Lower leg skin (tissue), 4 donors: ENCODE measurements at regions of chr9 and their contacts with region 1.

Region 1: DNA sequence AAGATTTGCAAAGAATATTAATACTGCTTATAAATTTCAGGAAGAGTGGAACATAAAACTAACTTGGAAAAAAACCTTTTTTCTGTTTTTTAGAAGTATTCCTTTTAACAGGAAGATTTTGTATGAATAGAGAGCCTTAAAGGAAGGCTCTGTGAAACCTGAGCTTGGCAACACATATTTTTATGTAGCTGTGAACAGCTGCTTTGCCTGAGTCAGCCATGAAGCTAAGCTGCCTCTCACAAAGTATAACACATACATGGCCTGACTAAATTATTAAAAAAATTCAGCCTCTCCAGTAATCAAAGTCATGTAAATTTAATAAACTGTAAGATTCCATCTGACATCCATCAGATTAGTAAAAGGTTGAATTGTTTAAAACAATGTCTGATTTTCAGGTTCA is 547.5 kb downstream of the ELAVL2 start:
- DNase-seq: no peak
- H3K4me3 ChIP-seq: no peak overlapping the region
- CTCF ChIP-seq: no peak
- POLR2A ChIP-seq: no peak

Region 2: DNA sequence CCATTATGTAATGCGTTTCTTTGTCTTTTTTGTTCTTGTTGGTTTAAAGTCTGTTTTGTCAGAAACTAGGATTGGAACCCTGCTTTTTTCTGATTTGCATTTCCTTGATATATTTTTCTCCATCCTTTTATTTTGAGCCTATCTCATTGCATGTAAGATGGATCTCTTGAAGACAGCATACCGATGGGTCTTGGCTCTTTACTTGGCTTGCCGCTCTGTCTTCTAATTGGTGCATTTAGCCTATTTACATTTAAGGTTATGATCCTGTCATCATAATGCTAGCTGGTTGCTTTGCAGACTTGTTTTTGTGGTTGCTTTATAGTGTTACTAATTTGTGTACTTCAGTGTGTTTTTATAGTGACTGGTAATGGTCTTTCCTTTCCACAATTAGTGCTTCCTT is 1256.2 kb before region 1 on chr9:
- intact Hi-C with region 1: no loop called
- DNase-seq: no peak
- H3K4me3 ChIP-seq: no peak overlapping the region
- CTCF ChIP-seq: no peak
- POLR2A ChIP-seq: no peak

Region 3: GRCh38 chr9:22469928-22470544 is 808.5 kb before region 1 on chr9:
- intact Hi-C with region 1: no loop called
- DNase-seq: no peak
- H3K4me3 ChIP-seq: no peak overlapping the region
- CTCF ChIP-seq: no peak
- POLR2A ChIP-seq: no peak

Region 4: DNA sequence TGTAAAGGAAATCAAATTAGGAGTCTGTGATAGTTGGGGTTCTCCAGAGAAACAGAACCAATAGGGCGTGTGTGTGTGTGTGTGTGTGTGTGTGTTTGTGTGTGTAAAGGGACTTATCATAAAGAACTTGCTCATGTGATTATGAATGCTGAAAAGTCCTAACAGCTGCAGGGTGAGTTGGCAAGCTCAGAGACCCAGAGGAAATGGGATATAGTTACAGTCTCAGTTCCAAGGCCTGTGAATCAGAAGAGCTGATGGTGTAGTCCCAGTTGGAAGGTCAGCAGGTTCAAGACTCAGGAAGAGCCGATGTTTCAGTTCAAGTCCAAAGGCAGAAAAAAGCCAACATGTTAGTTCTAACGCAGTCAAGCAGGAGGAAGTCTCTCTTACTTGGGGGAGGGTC is 333.3 kb after region 1 on chr9:
- intact Hi-C with region 1: no loop called
- DNase-seq: no peak
- H3K4me3 ChIP-seq: no peak overlapping the region
- CTCF ChIP-seq: no peak
- POLR2A ChIP-seq: no peak

Region 5: DNA sequence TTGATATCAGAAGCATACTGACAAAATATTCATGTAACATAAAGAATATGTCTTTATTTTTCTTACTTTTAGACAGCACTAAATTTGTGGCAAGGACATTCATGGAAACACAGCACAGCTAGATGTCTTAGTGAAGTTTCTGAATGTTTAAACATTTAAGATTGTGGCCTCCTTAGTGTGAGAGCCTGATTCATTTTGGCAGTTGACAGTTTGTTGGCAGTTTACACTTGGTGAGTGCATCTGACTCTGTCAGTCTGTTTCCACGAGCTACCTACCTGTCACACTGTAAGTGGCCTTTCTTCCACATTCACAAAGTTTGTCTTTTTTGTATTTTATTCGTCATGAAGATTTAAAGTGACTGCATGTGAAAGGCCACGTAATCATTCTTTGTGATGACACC is 1962.9 kb after region 1 on chr9:
- intact Hi-C with region 1: loop called (anchors 10 kb)
- DNase-seq: no peak
- H3K4me3 ChIP-seq: no peak overlapping the region
- CTCF ChIP-seq: no peak
- POLR2A ChIP-seq: no peak